ENCODE measurements at regions of chr10 and their contacts with region 1.

Region 1: GRCh38 chr10:17228091-17228940 is at the start of gene VIM:
- DNase-seq: peak; percentile 80 to 94 (median 84)
- ATAC-seq: peak; percentile 79
- H3K4me3 ChIP-seq: peak within 1 kb of the TSS; percentile 71
- H3K27ac ChIP-seq: peak within 1 kb of the TSS; percentile 82
- H3K4me1 ChIP-seq: peaks cover 21 to 36% of the 10 kb centered on the region in 2 experiments; a peak in 4 of 5 replicates
- H3K27me3 ChIP-seq: no peaks in the 10 kb centered on the region
- CTCF ChIP-seq: no peak
- EP300 ChIP-seq: peak; percentile 81
- POLR2A ChIP-seq: peak; percentile 66
- RAD21 ChIP-seq: peak in 1 of 2 experiments; percentile 14; a peak in 1 of 4 replicates
- polyA plus RNA-seq, gene VIM: 86.0 to 123 TPM

Region 2: DNA sequence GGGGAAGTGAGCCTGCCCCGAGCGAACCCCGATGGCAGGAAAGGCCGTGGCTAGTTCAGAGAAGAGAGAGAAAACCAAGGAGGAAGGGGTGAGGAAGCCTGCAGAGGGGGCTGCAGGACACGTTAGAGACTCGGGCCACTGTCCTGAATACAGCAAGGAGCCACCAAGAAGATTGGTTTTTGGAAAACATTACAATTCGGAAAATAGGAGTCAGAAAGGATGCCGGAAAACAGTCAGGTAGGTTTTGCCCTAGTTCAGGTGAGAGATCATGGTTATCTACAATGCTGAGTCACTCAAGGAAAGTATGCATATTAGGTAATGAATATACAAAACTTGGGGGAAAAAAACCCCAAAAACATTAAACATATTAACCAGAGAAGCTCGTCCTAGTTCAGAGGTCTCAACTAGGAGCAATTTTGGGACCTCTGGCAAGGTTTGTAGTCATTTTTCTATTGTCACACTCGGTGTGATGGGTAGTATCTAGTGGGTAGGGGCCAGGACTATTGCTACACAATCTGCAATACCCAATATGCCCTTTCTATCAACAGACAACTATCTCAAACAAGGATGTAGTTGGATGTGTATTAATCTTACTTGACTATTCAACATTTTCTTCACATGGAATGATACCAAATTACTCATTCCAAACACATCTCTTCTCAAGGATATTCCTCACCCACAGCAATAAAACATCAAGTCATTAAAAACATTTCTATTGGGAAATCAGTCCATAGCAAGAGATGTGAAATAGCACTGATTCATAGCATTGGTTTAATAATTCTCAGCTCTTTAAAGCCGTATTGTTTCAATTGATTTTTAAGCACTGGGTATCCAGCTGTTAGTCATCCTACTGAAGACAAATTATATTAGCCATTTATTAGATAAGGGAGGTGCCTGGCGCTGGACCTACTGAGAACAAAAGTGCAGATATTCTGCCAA is 336.7 kb before region 1 on chr10:
- CTCF ChIA-PET with region 1: interaction called, 7 read pairs
- POLR2A ChIA-PET with region 1: interaction called, 26 read pairs
- in situ Hi-C with region 1: no loop called
- intact Hi-C with region 1: loop called (anchors 1 kb)
- DNase-seq: peak; percentile 41 to 81 (median 55)
- ATAC-seq: peak; percentile 94
- H3K4me3 ChIP-seq: peak overlapping the region; percentile 20
- H3K27ac ChIP-seq: peak overlapping the region; percentile 77
- H3K4me1 ChIP-seq: peaks cover 0 to 6% of the 10 kb centered on the region in 2 experiments; a peak in 2 of 5 replicates
- H3K27me3 ChIP-seq: 0 out of 5 replicates have a peak, but pooled peaks cover 0 to 2% of the 10 kb centered on the region in 2 experiments
- CTCF ChIP-seq: peak; percentile 65 to 83 (median 82)
- EP300 ChIP-seq: peak; percentile 50; the same call in 1 of the 2 replicates
- POLR2A ChIP-seq: peak; percentile 100
- RAD21 ChIP-seq: peak; percentile 83 to 89

Region 3: DNA sequence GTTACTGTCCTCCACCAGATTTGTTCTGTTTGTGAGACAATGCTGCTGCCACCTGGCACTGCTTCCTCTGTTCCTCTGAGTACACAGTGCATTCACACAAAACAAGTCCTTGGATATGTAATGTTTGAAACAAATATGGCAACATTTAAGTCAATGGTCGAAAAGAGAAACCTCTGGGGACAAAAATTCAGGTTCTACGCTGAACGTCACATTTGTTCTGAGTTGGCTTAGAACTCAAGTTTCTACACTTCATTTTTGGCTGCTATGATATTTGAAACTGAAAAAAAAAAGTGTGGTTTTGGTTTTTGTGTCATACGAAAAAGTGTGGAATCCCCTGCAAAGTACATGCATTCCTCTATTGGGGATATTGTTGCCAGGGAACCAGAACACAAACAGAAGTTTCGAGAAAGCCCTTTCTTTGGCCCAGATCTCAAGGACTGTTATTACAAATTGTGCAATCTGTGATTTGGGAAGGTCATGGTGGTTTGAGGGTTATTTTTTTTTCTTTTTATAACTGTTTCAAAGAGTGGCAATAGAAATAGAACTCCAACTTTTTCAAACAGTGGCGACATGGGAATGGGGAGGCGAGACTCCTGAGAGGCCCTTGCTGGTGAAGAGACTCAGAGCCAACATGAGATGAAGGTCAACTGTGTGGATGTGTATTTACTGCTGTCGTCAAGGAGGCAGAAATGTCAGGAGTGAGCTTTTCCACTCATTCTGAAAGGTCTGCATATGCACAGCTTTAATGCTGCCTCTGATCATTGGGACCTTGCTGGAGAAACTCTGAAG is 226.2 kb before region 1 on chr10:
- CTCF ChIA-PET with region 1: no interaction called
- POLR2A ChIA-PET with region 1: interaction called, 3 read pairs
- in situ Hi-C with region 1: no loop called
- intact Hi-C with region 1: loop called (anchors 2 kb)
- DNase-seq: no peak
- ATAC-seq: no peak
- H3K4me3 ChIP-seq: no peak overlapping the region
- H3K27ac ChIP-seq: no peak overlapping the region
- H3K4me1 ChIP-seq: peaks cover 0 to 4% of the 10 kb centered on the region in 2 experiments; a peak in 2 of 5 replicates
- H3K27me3 ChIP-seq: 0 out of 5 replicates have a peak, but pooled peaks cover 0 to 5% of the 10 kb centered on the region in 2 experiments
- CTCF ChIP-seq: no peak
- EP300 ChIP-seq: no peak
- POLR2A ChIP-seq: no peak
- RAD21 ChIP-seq: no peak

Region 4: DNA sequence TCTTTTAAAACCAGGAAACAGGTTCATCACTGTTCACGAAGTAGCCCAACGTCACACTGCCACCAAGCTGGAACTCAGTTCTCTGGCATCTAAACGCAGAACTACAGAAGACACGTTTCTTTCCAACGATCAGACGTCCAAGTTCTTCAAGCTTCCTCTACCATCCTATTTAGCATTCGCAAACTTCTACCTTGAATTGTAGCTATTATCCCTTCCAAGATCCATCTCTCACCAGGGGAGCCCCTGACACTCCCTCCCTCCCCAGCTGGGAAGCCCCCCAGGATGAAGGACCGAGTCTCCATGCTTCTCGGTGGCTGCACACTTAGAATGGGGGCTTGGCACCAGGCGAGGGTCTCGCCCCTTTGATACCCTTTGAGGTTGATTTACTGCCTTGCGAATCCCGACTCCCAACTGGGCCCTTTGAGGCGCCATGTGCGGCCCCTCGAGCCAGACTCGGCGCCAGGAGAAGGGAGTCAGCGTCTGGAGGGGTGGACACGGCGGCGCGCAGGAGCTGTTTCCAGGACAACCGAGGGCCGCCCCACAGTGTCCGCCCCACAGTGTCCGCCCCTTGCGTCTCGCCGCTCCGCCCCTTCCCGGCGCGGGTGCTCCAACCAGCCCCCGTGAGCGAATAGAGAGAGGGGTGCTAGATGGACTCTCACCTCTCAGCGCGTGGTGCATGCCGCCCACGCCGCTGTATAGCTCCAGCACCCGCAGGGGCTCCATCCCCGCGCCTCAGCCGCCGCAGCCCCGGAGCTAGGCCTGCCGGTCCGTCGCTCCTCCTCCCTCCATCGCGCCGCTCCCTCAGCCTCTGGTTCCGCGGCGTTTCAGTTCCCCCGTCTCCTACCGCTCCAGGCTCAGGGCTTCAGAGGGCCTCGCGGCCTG is 27.2 kb before region 1 on chr10 and contains the start of gene TRDMT1:
- CTCF ChIA-PET with region 1: no interaction called
- POLR2A ChIA-PET with region 1: interaction called, 13 read pairs
- in situ Hi-C with region 1: no loop called
- intact Hi-C with region 1: loop called (anchors 1 kb)
- DNase-seq: peak; percentile 86 to 94 (median 88)
- ATAC-seq: peak; percentile 97
- H3K4me3 ChIP-seq: peak within 1 kb of the TSS; percentile 67
- H3K27ac ChIP-seq: peak within 1 kb of the TSS; percentile 89
- H3K4me1 ChIP-seq: peaks cover 14 to 52% of the 10 kb centered on the region in 2 experiments
- H3K27me3 ChIP-seq: no peaks in the 10 kb centered on the region
- CTCF ChIP-seq: peak in 2 of 3 experiments; percentile 1 to 35; a peak in 2 of 6 replicates
- EP300 ChIP-seq: peak; percentile 3; the same call in 1 of the 2 replicates
- POLR2A ChIP-seq: peak; percentile 83
- RAD21 ChIP-seq: peak; percentile 17 to 53; a peak in 3 of 4 replicates
- polyA plus RNA-seq, gene TRDMT1: 8.7 to 9.3 TPM

Region 5: GRCh38 chr10:17216217-17216900 is 12.0 kb before region 1 on chr10:
- CTCF ChIA-PET with region 1: no interaction called
- POLR2A ChIA-PET with region 1: interaction called, 8 read pairs
- in situ Hi-C with region 1: no loop called
- intact Hi-C with region 1: loop called (anchors 1 kb)
- DNase-seq: peak; percentile 32 to 87 (median 60)
- ATAC-seq: peak; percentile 89
- H3K4me3 ChIP-seq: no peak overlapping the region
- H3K27ac ChIP-seq: peak overlapping the region; percentile 88
- H3K4me1 ChIP-seq: peaks cover 5 to 44% of the 10 kb centered on the region in 2 experiments
- H3K27me3 ChIP-seq: no peaks in the 10 kb centered on the region
- CTCF ChIP-seq: peak in 1 of 3 experiments; percentile 7; a peak in 1 of 6 replicates
- EP300 ChIP-seq: peak; percentile 95
- POLR2A ChIP-seq: peak; percentile 49; the same call in 1 of the 2 replicates
- RAD21 ChIP-seq: no peak

Region 6: GRCh38 chr10:17309435-17309834 is 81.1 kb after region 1 on chr10:
- CTCF ChIA-PET with region 1: no interaction called
- POLR2A ChIA-PET with region 1: no interaction called
- in situ Hi-C with region 1: no loop called
- intact Hi-C with region 1: no loop called
- DNase-seq: no peak
- ATAC-seq: no peak
- H3K4me3 ChIP-seq: no peak overlapping the region
- H3K27ac ChIP-seq: no peak overlapping the region
- H3K4me1 ChIP-seq: no peaks in the 10 kb centered on the region
- H3K27me3 ChIP-seq: no peaks in the 10 kb centered on the region
- CTCF ChIP-seq: no peak
- EP300 ChIP-seq: no peak
- POLR2A ChIP-seq: no peak
- RAD21 ChIP-seq: no peak